Ascending aorta (tissue), 2 donors: ENCODE measurements at regions of chr20 and their contacts with region 1.

Region 1: DNA sequence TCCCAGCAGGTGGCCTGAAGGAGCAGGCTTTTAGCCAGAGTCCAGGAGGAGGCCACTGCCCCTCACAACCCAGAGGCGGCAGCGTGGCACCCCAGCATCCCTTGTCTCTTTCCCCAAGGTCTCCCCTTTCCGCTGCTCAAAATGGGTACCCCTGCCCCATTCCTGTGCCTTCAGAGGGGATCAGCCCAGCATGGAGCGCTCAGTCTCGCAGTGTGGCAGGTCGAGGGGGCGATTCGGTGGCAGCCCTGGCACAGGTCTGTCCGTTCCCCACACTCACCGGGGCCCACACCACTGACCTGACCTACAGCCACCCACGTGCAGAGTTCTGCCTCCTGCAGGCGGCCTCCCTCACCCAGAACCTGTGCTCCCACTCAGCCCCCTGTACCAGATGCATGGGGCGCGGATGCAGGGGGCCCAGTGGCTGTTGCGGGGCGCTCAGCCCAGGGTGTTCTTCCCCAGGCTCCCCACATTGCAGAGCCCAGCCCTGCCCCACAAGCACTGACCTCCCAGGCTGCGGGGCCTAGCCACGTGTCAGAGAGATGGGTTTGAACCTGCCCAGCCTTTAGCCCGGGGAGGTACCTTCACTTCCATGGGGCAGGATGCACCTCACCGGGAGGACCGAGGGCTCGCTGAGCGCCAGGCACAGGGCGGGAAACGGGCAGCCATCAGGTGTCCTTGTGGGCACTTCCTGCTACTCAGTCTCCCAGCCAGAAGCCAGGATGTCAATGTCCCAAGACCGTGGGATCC is 41.8 kb downstream of the DSTN start:
- DNase-seq: peak in 1 of 2 donors; percentile 67
- H3K4me3 ChIP-seq: peak overlapping the region in 1 of 2 donors; percentile 16
- H3K27ac ChIP-seq: peak overlapping the region; percentile 84 to 93
- H3K4me1 ChIP-seq: peaks cover 40 to 81% of the 10 kb centered on the region in 2 donors
- H3K27me3 ChIP-seq: no peaks in the 10 kb centered on the region
- CTCF ChIP-seq: peak in 1 of 3 experiments; percentile 33

Region 2: DNA sequence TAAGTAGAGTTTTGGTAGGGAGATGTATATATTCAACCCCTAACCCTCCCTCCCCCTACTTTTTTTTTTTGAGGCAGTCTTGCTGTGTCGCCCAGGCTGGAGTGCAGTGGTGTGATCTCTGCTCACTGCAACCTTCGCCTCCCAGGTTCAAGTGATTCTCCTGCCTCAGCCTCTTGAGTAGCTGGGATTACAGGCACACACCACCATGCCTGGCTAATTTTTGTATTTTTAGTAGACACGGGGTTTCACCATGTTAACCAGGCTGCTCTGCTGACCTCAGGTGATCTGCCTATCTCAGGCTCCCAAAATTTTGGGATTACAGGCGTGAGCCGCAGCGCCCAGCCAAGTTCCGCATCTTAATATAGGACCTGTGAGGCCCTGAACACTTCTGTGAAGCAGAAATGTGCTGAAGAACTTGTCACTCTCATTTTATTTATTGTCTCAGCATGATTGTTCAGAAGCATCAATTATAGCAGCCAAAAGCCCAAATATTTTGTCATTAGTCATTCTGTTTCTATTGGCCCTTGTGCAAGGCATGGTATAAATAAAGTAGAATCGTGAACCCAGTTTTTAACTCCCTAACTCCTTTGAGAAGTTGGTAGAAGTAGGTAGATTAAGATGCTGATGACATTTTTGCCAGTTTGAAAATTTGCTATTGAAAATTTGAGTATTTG is 22.4 kb before region 1 on chr20:
- intact Hi-C with region 1: loop called (anchors 2 kb)
- DNase-seq: no peak
- H3K4me3 ChIP-seq: peak overlapping the region; percentile 28 to 55
- H3K27ac ChIP-seq: peak overlapping the region; percentile 67 to 75
- H3K4me1 ChIP-seq: peaks cover 16 to 70% of the 10 kb centered on the region in 2 donors
- H3K27me3 ChIP-seq: no peaks in the 10 kb centered on the region
- CTCF ChIP-seq: no peak